Posterior vena cava (tissue), 2 donors: ENCODE measurements at regions of chr3 and their contacts with region 1.

Region 1: DNA sequence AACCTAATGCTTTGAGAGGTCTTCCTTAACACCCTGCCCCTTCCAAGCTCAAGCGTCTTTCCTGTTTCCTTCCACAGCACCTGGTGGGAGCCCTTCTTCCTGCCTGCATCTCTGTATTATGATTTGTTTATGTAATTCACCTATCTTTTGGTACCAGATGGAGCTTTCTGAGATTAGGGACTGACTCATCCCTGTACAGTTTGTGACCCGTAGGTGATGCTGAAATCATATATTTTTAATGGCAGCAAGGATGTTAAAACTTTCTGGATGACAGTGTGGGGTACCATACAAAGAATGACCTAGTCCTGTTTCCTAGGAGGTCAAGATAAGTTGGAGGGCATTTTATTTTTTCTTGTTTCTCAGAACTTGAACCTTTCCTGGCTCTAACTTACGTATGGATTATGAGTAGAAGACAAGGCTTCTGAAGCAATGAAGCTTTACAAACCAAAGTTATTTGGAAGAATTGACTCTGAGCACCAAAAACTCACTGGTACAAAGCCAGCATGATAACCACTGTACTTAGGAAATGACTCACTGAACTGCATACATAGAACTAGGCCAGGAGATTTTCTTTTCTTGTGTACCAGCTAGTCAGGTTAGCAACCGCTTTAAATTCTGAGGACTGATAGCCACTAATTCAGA is 46.6 kb downstream of the HHLA2 start:
- DNase-seq: no peak

Region 2: GRCh38 chr3:106985721-106986120 is 1357.2 kb before region 1 on chr3:
- intact Hi-C with region 1: no loop called
- DNase-seq: no peak

Region 3: GRCh38 chr3:108381529-108382140 is 38.7 kb after region 1 on chr3:
- intact Hi-C with region 1: loop called in 1 of 2 experiments (anchors 1 kb)
- DNase-seq: no peak